GM12878 (cell line): ENCODE measurements at regions of chr3 and their contacts with region 1.

Region 1: GRCh38 chr3:157239082-157239704 is 79.2 kb upstream of the CCNL1 start:
- DNase-seq: peak; percentile 8
- ATAC-seq: peak; percentile 100
- H3K4me3 ChIP-seq: no peak overlapping the region
- H3K27ac ChIP-seq: no peak overlapping the region
- H3K4me1 ChIP-seq: no peaks in the 10 kb centered on the region
- H3K27me3 ChIP-seq: no peaks in the 10 kb centered on the region; a peak in 2 of 4 replicates
- CTCF ChIP-seq: peak; percentile 94 to 96 (median 95)
- EP300 ChIP-seq: no peak
- POLR2A ChIP-seq: no peak
- RAD21 ChIP-seq: peak; percentile 89

Region 2: DNA sequence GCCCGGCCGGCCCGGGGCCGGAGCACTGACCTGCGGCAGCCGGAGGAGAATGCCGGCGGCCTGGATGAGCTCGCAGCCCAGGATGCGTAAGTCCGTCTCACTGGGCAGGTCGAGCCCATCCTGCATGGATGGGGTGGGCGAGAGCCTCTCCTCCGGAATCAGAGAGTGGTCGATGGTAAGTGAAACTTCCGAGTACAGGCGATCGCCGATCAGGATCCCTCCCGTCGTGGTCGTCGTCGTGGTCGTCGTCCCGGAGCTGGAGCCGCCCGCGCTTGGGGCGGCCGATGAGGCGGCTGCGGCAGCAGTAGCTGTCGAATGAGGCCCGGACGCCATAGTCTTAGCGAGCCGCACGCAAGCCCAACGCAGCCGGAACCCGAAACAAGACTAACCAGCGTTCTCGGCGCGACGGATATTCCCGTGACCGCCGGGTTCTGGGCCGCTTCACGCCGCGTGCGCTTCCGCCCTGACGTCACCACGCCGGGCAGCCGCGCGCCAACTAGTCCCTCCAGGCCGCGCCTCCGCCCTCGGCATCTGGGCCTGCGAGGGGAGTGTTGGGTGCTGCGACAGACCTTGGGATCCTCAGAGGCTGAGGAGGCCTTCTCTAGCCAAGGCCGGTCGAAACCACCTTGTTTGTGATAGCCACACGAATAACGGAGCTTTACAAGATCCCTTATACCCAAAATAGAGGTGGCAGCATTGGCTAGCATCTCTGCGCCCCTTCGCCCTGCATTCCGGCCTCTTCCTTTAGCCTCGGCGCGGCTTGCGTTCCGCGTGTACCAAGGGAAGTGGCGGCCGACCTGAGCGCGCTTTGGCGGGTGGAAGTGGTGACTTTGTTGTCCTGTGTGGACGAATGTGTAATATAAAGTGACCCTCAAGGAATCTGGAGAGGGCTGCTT is 79.2 kb before region 1 on chr3 and contains the start of gene CCNL1:
- CTCF ChIA-PET with region 1: interaction called, 6 read pairs
- POLR2A ChIA-PET with region 1: no interaction called
- RAD21 ChIA-PET with region 1: interaction called, 4 read pairs
- SMC1A ChIA-PET with region 1: no interaction called
- in situ Hi-C with region 1: no loop called
- intact Hi-C with region 1: loop called (anchors 1 kb)
- DNase-seq: peak; percentile 82
- ATAC-seq: peak; percentile 88
- H3K4me3 ChIP-seq: peak within 1 kb of the TSS; percentile 72
- H3K27ac ChIP-seq: peak within 1 kb of the TSS; percentile 99
- H3K4me1 ChIP-seq: peaks cover 11% of the 10 kb centered on the region; the same call in 1 of the 2 replicates
- H3K27me3 ChIP-seq: no peaks in the 10 kb centered on the region
- CTCF ChIP-seq: no peak
- EP300 ChIP-seq: peak; percentile 49 to 66; a peak in 2 of 4 replicates
- POLR2A ChIP-seq: peak; percentile 98
- RAD21 ChIP-seq: no peak; the same call in 1 of the 2 replicates
- polyA plus RNA-seq, gene CCNL1: 22.2 to 39.8 TPM